CD8-positive, alpha-beta memory T cell (primary cell): ENCODE measurements at regions of chr5 and their contacts with region 1.

Region 1: GRCh38 chr5:157626841-157627240 is 25.4 kb downstream of the SOX30 start:
- DNase-seq: no peak
- H3K4me3 ChIP-seq: no peak overlapping the region
- H3K4me3 Mint-ChIP-seq: no peak overlapping the region
- H3K27ac ChIP-seq: no peak overlapping the region
- H3K27ac Mint-ChIP-seq: no peak overlapping the region
- H3K4me1 ChIP-seq: no peaks in the 10 kb centered on the region
- H3K4me1 Mint-ChIP-seq: no peaks in the 10 kb centered on the region
- H3K27me3 ChIP-seq: no peaks in the 10 kb centered on the region
- H3K27me3 Mint-ChIP-seq: no peaks in the 10 kb centered on the region

Region 2: GRCh38 chr5:157400741-157401495 is 225.9 kb before region 1 on chr5:
- CTCF ChIA-PET with region 1: no interaction called
- POLR2A ChIA-PET with region 1: interaction called, 10 read pairs
- DNase-seq: no peak
- H3K4me3 ChIP-seq: no peak overlapping the region
- H3K4me3 Mint-ChIP-seq: no peak overlapping the region
- H3K27ac ChIP-seq: no peak overlapping the region
- H3K27ac Mint-ChIP-seq: no peak overlapping the region
- H3K4me1 ChIP-seq: no peaks in the 10 kb centered on the region
- H3K4me1 Mint-ChIP-seq: no peaks in the 10 kb centered on the region
- H3K27me3 ChIP-seq: no peaks in the 10 kb centered on the region
- H3K27me3 Mint-ChIP-seq: peaks cover 17 to 28% of the 10 kb centered on the region in 2 donors

Region 3: DNA sequence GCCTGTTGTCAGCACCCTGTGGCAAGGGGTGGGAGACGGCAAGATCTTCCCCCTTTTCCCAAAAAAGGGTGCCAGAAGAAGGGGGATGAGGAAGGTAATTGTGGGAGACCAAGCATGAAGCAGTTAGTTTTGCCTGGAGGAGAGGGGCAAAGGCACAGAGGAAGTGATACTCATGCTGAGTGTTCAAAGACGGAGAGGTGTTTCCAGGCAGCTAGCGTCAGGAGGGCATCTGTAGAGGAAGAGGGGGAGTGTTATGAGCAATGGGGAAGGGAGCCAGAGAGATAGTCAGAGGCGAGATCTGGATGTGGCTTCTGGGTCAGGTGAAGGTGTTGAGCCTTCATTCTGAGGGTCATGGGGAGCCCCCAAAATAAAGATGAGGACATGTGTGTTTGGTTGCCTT is 24.3 kb before region 1 on chr5:
- CTCF ChIA-PET with region 1: no interaction called
- POLR2A ChIA-PET with region 1: no interaction called
- DNase-seq: no peak
- H3K4me3 ChIP-seq: no peak overlapping the region
- H3K4me3 Mint-ChIP-seq: peak overlapping the region in 4 of 7 donors; percentile 0 to 42 (median 20)
- H3K27ac ChIP-seq: no peak overlapping the region
- H3K27ac Mint-ChIP-seq: peak overlapping the region; percentile 48 to 95 (median 82)
- H3K4me1 ChIP-seq: peaks cover 31% of the 10 kb centered on the region
- H3K4me1 Mint-ChIP-seq: peaks cover 50 to 67% (median 52%) of the 10 kb centered on the region in 3 donors
- H3K27me3 ChIP-seq: no peaks in the 10 kb centered on the region
- H3K27me3 Mint-ChIP-seq: no peaks in the 10 kb centered on the region